Transverse colon (tissue), 4 donors: ENCODE measurements at regions of chr14 and their contacts with region 1.

Region 1: GRCh38 chr14:104715422-104715821 is 8.6 kb upstream of the ADSS1 start:
- DNase-seq: no peak
- H3K4me3 ChIP-seq: no peak overlapping the region
- H3K27ac ChIP-seq: no peak overlapping the region
- H3K4me1 ChIP-seq: no peaks in the 10 kb centered on the region
- H3K27me3 ChIP-seq: no peaks in the 10 kb centered on the region
- CTCF ChIP-seq: no peak
- EP300 ChIP-seq: no peak
- POLR2A ChIP-seq: no peak

Region 2: GRCh38 chr14:104370256-104370870 is 345.1 kb before region 1 on chr14:
- in situ Hi-C with region 1: no loop called
- intact Hi-C with region 1: no loop called
- DNase-seq: no peak
- H3K4me3 ChIP-seq: no peak overlapping the region
- H3K27ac ChIP-seq: no peak overlapping the region
- H3K4me1 ChIP-seq: no peaks in the 10 kb centered on the region
- H3K27me3 ChIP-seq: peaks cover 15% of the 10 kb centered on the region
- CTCF ChIP-seq: peak in 4 of 5 experiments; percentile 38 to 57 (median 42)
- EP300 ChIP-seq: no peak
- POLR2A ChIP-seq: no peak

Region 3: GRCh38 chr14:104639889-104640548 is 75.4 kb before region 1 on chr14:
- in situ Hi-C with region 1: loop called in 1 of 4 experiments (anchors 10 kb)
- intact Hi-C with region 1: no loop called
- DNase-seq: peak; percentile 66
- H3K4me3 ChIP-seq: no peak overlapping the region
- H3K27ac ChIP-seq: no peak overlapping the region
- H3K4me1 ChIP-seq: peaks cover 0 to 3% (median 0%) of the 10 kb centered on the region in 4 donors
- H3K27me3 ChIP-seq: peaks cover 45% of the 10 kb centered on the region
- CTCF ChIP-seq: peak; percentile 79 to 89 (median 87)
- EP300 ChIP-seq: no peak
- POLR2A ChIP-seq: no peak